ENCODE measurements at regions of chr18 and their contacts with region 1.

Region 1: GRCh38 chr18:48230467-48231113 is 178.6 kb downstream of the ZBTB7C start:
- DNase-seq: peak; percentile 67
- H3K4me3 Mint-ChIP-seq: no peak overlapping the region
- H3K27ac Mint-ChIP-seq: peak overlapping the region; percentile 2
- H3K4me1 Mint-ChIP-seq: peaks cover 49% of the 10 kb centered on the region
- H3K27me3 Mint-ChIP-seq: peaks cover 26% of the 10 kb centered on the region

Region 2: GRCh38 chr18:48250362-48250907 is 19.8 kb after region 1 on chr18:
- CTCF ChIA-PET with region 1: interaction called, 10 read pairs
- POLR2A ChIA-PET with region 1: no interaction called
- DNase-seq: no peak
- H3K4me3 Mint-ChIP-seq: no peak overlapping the region
- H3K27ac Mint-ChIP-seq: no peak overlapping the region
- H3K4me1 Mint-ChIP-seq: no peaks in the 10 kb centered on the region
- H3K27me3 Mint-ChIP-seq: peaks cover 57% of the 10 kb centered on the region

Region 3: DNA sequence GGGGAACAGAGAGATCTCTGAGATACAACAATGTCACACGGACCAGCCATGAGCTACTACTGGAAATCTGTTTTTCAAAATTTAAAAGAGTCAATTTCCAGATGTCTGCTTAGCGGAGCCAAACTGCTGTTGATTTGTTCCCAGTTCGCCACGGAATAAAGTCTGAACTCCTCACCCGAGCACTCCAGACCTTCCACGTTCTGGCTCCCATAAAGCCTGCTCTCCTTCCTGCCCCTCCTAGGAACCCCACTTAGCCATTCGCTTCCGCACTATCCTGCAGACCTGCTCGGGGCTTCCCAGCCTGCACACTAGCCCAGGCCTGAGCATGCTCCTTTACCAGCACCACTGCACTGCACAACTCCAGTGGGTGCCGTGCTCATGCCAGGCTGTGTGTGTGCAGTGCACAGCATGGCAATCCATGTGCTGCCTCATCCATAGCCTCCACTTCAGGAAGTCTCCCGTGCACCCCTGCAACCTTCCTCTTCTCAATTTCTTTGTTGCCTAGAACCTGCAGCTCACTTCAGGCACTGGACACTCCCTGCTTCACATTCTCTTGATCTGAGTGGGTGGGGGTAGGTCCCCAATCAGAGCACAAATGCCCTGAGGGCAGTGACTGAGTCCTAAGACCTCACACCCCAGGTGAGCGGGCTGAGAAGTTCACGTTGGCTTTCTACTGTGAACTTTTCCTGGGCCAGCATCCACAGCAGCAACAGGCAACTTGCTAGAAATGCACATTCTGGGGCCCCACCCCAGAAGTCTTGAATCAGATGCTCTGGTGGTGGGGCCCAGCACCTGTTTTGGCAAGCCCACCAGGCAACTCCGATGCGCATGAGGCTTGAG is 124.9 kb after region 1 on chr18:
- CTCF ChIA-PET with region 1: no interaction called
- POLR2A ChIA-PET with region 1: no interaction called
- DNase-seq: no peak
- H3K4me3 Mint-ChIP-seq: no peak overlapping the region
- H3K27ac Mint-ChIP-seq: no peak overlapping the region
- H3K4me1 Mint-ChIP-seq: peaks cover 1% of the 10 kb centered on the region
- H3K27me3 Mint-ChIP-seq: peaks cover 18% of the 10 kb centered on the region

Measured in activated CD4-positive, alpha-beta memory T cell treated with anti-CD3 and anti-CD28 coated beads, Interleukin-2, amount 10 ng/mL, durations not matched to agents 7 days and 5 days (primary cell).